Activated CD8-positive, alpha-beta T cell treated with anti-CD3 and anti-CD28 coated beads for 36 hours (primary cell): ENCODE measurements at regions of chr15 and their contacts with region 1.

Region 1: DNA sequence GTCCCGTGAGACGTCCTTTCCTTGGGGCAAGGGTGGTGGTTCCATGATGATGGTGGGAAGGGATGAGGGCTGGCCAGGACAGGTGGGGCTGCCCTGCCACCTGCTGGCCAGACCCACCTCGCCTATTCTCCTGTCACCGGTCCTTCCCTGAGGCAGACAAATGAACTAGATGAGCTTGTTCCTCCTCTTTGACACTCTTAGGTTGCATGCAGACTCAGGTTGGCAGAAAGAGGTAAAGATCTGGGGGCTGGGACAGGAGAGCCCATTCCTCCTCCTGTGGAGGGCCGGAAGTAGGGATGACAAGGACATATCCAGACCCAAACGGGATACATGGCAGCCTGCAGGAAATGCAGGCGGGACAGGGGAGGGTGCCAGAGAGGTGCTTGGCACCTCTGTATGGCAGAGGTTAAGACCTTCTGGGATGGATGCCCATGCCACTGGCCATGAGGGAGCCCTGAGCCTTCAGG is 38.6 kb downstream of the ACSBG1 start:
- DNase-seq: peak; percentile 52
- ATAC-seq: peak; percentile 94
- H3K4me3 Mint-ChIP-seq: no peak overlapping the region
- H3K27ac Mint-ChIP-seq: no peak overlapping the region
- H3K4me1 Mint-ChIP-seq: no peaks in the 10 kb centered on the region
- H3K27me3 Mint-ChIP-seq: no peaks in the 10 kb centered on the region
- CTCF ChIP-seq: peak; percentile 89

Region 2: DNA sequence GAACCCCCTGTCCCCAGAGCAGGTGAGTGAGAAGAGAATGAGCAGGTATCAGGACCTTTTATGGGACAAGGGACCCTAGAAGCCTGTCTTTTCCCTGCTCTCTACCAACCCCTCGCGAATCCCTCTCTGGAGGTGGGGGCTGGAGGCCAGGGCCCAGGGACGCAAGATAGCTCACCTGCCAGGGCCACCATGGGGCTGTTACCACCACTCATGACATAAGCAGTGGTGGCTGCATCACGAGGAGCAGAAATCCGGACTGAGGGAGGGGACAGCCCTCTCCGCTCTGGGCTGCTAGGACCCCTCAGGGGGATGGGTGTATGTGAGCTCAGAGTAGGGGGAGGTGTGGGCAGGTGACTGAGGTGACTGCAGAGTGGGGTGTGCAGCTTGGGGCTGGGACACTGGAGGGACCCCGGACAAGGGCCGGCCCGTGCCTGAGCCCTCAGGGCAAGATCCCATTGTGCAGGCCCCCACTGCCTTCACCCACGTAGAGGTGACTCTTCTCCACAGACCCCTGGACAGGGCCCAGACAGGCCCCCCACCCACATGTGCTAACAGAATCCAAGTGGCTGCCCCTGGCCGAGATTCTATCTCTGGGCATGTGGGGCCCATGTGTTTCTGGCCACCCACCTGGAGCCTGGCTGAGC is 308.8 kb before region 1 on chr15:
- CTCF ChIA-PET with region 1: no interaction called
- POLR2A ChIA-PET with region 1: no interaction called
- intact Hi-C with region 1: no loop called
- DNase-seq: no peak
- ATAC-seq: no peak
- H3K4me3 Mint-ChIP-seq: no peak overlapping the region
- H3K27ac Mint-ChIP-seq: no peak overlapping the region
- H3K4me1 Mint-ChIP-seq: no peaks in the 10 kb centered on the region
- H3K27me3 Mint-ChIP-seq: no peaks in the 10 kb centered on the region
- CTCF ChIP-seq: no peak

Region 3: DNA sequence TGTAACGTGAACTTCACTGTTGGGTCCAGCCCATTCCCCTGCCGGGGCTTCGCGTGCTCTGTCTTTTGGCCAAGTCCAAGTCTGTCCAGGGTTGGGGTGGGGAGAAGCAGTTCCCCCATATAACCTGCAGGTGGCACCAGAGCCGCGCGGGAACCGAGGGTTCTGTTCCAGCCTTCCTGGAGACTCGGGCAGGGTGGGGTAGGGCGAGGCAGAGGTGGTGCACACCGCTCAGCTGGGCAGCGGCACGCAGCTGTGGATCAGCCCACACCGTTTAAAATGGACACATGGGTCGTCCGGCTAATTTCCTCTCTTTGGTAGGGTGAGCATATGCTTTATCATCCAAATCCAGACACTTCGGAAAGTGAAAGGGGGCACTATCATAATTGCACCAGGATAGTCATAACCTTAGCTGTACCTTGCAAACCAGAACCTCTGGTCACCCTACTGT is 236.3 kb before region 1 on chr15:
- CTCF ChIA-PET with region 1: interaction called, 28 read pairs
- POLR2A ChIA-PET with region 1: no interaction called
- intact Hi-C with region 1: no loop called
- DNase-seq: peak; percentile 84
- ATAC-seq: peak; percentile 100
- H3K4me3 Mint-ChIP-seq: peak overlapping the region; percentile 54
- H3K27ac Mint-ChIP-seq: no peak overlapping the region
- H3K4me1 Mint-ChIP-seq: peaks cover 2% of the 10 kb centered on the region
- H3K27me3 Mint-ChIP-seq: peaks cover 7% of the 10 kb centered on the region
- CTCF ChIP-seq: peak; percentile 98

Region 4: DNA sequence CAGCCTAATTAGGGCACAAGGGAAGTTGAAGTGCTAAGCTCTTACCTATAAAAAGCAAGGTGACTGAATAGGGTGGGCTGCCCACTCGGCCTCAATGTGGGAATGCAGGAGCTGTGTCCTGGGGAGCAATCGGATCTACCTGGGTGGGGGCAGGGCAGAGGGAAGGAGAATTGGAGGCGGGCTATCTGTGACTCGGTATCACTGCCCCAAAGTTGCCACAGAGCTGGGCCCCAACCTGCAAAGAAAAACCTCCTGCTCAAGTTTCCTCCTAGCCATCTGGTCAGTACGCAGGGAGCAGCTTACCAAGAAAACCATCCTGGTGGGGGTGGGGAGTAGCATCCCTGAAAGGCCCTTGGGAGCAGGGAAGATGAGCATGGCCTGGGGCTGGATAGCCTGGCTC is 75.2 kb before region 1 on chr15:
- CTCF ChIA-PET with region 1: interaction called, 102 read pairs
- POLR2A ChIA-PET with region 1: no interaction called
- intact Hi-C with region 1: no loop called
- DNase-seq: no peak
- ATAC-seq: no peak
- H3K4me3 Mint-ChIP-seq: no peak overlapping the region
- H3K27ac Mint-ChIP-seq: no peak overlapping the region
- H3K4me1 Mint-ChIP-seq: no peaks in the 10 kb centered on the region
- H3K27me3 Mint-ChIP-seq: no peaks in the 10 kb centered on the region
- CTCF ChIP-seq: no peak

Region 5: GRCh38 chr15:78140292-78140691 is 55.5 kb before region 1 on chr15:
- CTCF ChIA-PET with region 1: interaction called, 15 read pairs
- POLR2A ChIA-PET with region 1: interaction called, 4 read pairs
- intact Hi-C with region 1: no loop called
- DNase-seq: no peak
- ATAC-seq: no peak
- H3K4me3 Mint-ChIP-seq: no peak overlapping the region
- H3K27ac Mint-ChIP-seq: no peak overlapping the region
- H3K4me1 Mint-ChIP-seq: no peaks in the 10 kb centered on the region
- H3K27me3 Mint-ChIP-seq: no peaks in the 10 kb centered on the region
- CTCF ChIP-seq: no peak

Region 6: DNA sequence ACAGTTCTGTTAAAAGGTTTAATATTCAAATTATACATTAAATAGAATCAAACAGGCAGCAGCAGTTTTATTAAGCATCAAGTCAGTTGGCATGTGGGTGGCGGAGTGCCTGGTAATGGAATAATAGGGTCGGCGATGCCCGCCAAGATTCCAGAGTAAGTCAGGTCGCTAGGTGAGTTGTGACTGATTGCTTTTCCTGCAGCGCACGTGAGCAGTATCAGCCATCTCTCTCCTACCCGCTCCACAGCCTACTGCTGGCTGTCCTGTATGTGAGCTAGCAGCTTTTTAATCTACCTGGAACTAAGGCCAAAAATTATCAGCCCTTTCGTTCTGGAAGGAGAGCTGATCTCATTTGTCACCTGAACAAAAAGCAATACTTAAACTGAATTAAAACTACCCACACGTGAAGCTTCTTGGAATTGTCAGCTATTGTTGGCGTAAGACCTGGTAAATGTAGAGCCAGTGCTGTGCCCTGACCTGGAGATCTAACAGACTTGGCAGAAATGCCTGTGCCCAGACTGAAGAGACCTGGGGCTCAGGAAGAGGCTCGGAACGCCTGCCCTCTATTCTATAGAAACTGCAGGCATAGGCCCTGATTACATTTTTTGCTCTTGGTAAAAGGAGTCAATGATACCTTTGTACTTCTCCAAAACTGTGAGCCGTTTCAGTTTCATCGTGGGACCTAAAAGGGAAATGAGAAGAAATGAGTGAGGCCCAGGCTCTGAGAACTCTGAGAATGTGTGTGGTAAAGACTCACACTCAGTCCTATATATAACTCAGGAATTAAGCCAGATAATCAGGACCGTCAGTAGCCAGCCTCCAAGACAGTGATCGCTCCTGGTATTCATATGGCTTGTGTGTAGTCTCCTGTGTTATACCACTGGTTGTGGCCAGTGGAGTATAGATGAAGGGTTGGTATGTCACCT is 24.7 kb before region 1 on chr15:
- CTCF ChIA-PET with region 1: interaction called, 29 read pairs
- POLR2A ChIA-PET with region 1: no interaction called
- intact Hi-C with region 1: no loop called
- DNase-seq: no peak
- ATAC-seq: no peak
- H3K4me3 Mint-ChIP-seq: no peak overlapping the region
- H3K27ac Mint-ChIP-seq: peak overlapping the region; percentile 33
- H3K4me1 Mint-ChIP-seq: peaks cover 37% of the 10 kb centered on the region
- H3K27me3 Mint-ChIP-seq: no peaks in the 10 kb centered on the region
- CTCF ChIP-seq: no peak

Region 7: GRCh38 chr15:78212546-78213424 is 17.0 kb after region 1 on chr15:
- CTCF ChIA-PET with region 1: interaction called, 12 read pairs
- POLR2A ChIA-PET with region 1: no interaction called
- intact Hi-C with region 1: no loop called
- DNase-seq: no peak
- ATAC-seq: no peak
- H3K4me3 Mint-ChIP-seq: no peak overlapping the region
- H3K27ac Mint-ChIP-seq: no peak overlapping the region
- H3K4me1 Mint-ChIP-seq: no peaks in the 10 kb centered on the region
- H3K27me3 Mint-ChIP-seq: peaks cover 4% of the 10 kb centered on the region
- CTCF ChIP-seq: no peak

Region 8: DNA sequence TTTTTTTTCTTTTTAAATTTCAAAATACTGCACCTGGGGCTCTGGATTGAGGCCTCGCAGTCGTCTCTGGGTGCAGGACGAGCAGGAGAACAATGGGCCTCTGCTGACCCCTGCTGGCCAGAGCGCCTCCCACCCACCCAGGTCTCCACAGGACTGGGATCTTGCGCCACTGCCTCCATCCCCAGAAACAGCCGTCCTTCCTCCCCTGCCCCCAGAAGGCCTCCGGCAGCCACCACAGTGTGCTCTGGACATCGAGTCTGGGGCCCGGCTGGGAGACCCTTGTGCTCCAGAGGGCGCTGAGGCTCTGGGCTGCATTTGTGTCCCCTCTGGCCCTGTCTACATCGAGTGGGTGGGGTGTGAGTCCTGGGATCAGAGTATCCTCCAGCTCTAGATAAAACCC is 45.2 kb after region 1 on chr15:
- CTCF ChIA-PET with region 1: interaction called, 38 read pairs
- POLR2A ChIA-PET with region 1: no interaction called
- intact Hi-C with region 1: no loop called
- DNase-seq: peak; percentile 89
- ATAC-seq: peak; percentile 98
- H3K4me3 Mint-ChIP-seq: no peak overlapping the region
- H3K27ac Mint-ChIP-seq: no peak overlapping the region
- H3K4me1 Mint-ChIP-seq: peaks cover 1% of the 10 kb centered on the region
- H3K27me3 Mint-ChIP-seq: peaks cover 1% of the 10 kb centered on the region
- CTCF ChIP-seq: peak; percentile 80

Region 9: GRCh38 chr15:78389322-78389721 is 193.6 kb after region 1 on chr15:
- CTCF ChIA-PET with region 1: no interaction called
- POLR2A ChIA-PET with region 1: no interaction called
- intact Hi-C with region 1: no loop called
- DNase-seq: no peak
- ATAC-seq: no peak
- H3K4me3 Mint-ChIP-seq: no peak overlapping the region
- H3K27ac Mint-ChIP-seq: no peak overlapping the region
- H3K4me1 Mint-ChIP-seq: no peaks in the 10 kb centered on the region
- H3K27me3 Mint-ChIP-seq: peaks cover 16% of the 10 kb centered on the region
- CTCF ChIP-seq: no peak